ENCODE measurements at regions of chr12 and their contacts with region 1.

Region 1: GRCh38 chr12:108514973-108515814 is at the start of gene FICD:
- DNase-seq: peak; percentile 100
- H3K4me3 Mint-ChIP-seq: peak within 1 kb of the TSS; percentile 96
- H3K27ac Mint-ChIP-seq: peak within 1 kb of the TSS; percentile 93
- H3K4me1 Mint-ChIP-seq: peaks cover 20% of the 10 kb centered on the region
- H3K27me3 Mint-ChIP-seq: peaks cover 13% of the 10 kb centered on the region
- CTCF ChIP-seq: no peak
- total RNA-seq, gene FICD: 14.3 and 15.4 TPM in 2 replicates

Region 2: DNA sequence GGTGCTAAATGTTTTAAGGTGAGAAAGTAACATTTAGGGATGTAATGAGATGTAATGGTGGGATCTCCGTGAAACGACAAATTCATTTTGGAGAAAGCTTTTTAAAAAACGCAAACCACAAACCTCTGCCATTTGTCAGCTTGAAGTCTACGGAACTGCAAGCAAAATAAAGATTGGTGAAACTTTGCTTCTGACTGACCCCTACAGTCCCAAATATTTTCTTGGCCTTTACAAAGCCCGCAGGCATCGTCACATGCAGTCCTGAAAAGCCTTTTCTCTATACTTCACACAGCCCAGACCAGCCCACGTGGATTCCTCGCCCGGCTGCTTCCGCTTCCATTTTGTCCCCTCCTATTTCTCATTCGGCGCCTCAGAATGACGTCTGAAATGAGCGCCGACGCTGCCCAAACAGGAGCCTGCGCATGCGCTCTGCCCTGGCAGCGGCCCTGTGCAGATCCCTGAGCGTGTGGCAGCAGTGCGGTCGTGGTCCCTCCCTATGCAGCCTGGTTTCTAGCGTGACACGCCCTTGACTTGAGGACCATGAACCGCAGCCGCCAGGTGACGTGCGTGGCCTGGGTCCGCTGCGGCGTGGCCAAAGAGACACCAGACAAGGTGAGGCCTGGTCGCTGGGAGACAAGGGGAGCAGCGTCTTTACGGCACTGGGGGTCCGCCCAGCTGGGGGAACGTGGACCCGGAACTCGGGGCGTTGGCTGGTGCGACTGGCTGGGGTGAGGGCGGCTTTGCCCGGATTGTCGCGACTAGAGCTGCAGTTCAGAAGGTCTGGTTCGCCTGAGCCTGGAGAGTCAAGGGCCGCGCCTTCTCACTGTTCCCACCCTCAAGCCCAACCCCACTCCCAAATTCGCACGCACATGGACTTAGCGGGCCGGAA is 829.6 kb before region 1 on chr12 and contains the start of gene PWP1:
- CTCF ChIA-PET with region 1: no interaction called
- intact Hi-C with region 1: loop called (anchors 10 kb)
- DNase-seq: peak; percentile 96
- H3K4me3 Mint-ChIP-seq: peak within 1 kb of the TSS; percentile 94
- H3K27ac Mint-ChIP-seq: peak within 1 kb of the TSS; percentile 96
- H3K4me1 Mint-ChIP-seq: no peaks in the 10 kb centered on the region
- H3K27me3 Mint-ChIP-seq: peaks cover 6% of the 10 kb centered on the region
- CTCF ChIP-seq: no peak
- total RNA-seq, gene PWP1: 52.7 and 60.5 TPM in 2 replicates

Region 3: DNA sequence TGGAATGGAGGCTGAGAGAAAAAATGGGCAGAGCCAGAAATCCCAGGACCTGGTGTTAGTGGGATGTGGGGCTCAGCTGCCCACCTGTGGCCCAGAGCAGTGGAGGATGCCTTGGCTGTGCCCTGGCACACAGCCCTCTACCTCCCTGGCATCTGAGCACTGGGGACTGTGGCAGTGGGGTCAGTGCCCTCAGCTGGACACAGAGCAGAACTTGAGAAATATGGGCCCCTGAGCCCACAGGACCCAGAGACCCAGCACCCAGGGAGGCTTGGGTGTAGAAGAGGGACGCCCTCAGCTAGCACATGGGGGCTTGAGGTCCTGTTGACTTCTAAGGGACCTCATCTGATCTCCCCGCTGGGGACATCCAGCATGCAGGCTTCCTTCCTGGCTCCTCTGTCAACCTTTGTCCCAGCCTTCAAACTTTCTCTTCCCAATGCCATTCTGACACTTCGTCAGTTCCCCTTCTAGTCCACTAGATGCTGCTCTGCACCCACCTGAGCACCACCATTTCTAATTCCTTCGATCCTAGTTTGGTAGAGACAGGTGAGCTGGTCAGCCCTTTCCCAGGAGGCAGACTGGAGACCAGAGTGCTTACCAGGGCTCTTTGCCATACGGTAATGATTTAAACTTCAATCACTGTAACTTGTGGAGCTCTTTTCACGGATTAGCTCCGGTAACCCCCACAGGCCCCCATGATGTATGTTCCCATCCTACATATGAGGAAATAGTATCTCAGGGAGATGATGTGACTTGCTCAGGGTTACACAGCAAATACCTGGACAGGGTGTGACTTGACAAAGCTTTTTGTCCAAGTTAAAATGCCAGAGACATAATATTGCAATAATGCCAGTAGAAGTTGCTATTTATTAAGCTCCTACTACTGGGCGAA is 597.0 kb before region 1 on chr12:
- CTCF ChIA-PET with region 1: interaction called, 8 read pairs
- intact Hi-C with region 1: loop called (anchors 1 kb)
- DNase-seq: peak; percentile 36
- H3K4me3 Mint-ChIP-seq: no peak overlapping the region
- H3K27ac Mint-ChIP-seq: no peak overlapping the region
- H3K4me1 Mint-ChIP-seq: no peaks in the 10 kb centered on the region
- H3K27me3 Mint-ChIP-seq: peaks cover 88% of the 10 kb centered on the region
- CTCF ChIP-seq: peak; percentile 54

Region 4: GRCh38 chr12:107992870-107993451 is 522.2 kb before region 1 on chr12:
- CTCF ChIA-PET with region 1: interaction called, 10 read pairs
- intact Hi-C with region 1: loop called (anchors 1 kb)
- DNase-seq: peak; percentile 53
- H3K4me3 Mint-ChIP-seq: no peak overlapping the region
- H3K27ac Mint-ChIP-seq: no peak overlapping the region
- H3K4me1 Mint-ChIP-seq: no peaks in the 10 kb centered on the region
- H3K27me3 Mint-ChIP-seq: peaks cover 45% of the 10 kb centered on the region
- CTCF ChIP-seq: peak; percentile 56

Region 5: GRCh38 chr12:108193917-108194316 is 321.3 kb before region 1 on chr12:
- CTCF ChIA-PET with region 1: no interaction called
- intact Hi-C with region 1: loop called (anchors 5 kb)
- DNase-seq: peak; percentile 49
- H3K4me3 Mint-ChIP-seq: no peak overlapping the region
- H3K27ac Mint-ChIP-seq: no peak overlapping the region
- H3K4me1 Mint-ChIP-seq: peaks cover 5% of the 10 kb centered on the region
- H3K27me3 Mint-ChIP-seq: peaks cover 40% of the 10 kb centered on the region
- CTCF ChIP-seq: peak; percentile 63

Region 6: DNA sequence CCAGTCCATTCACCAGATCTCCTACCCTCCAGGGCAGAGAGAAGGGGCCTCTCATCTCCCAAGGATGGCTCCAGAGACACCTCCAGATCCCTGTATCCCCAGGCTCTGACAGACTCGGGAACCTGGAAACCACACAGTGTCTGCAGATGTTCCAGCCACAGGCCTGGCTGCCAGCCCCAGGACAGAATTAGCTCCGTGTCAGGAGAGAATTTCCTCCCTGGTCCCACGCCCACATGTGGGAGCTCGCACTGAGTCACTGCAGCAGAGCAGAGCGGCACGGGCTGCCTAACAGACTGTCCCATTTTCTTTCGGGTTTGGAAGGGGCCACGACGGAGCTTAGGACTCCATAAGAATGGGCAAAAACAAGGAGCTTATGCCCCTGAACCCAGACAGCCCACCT is 209.7 kb before region 1 on chr12:
- CTCF ChIA-PET with region 1: no interaction called
- intact Hi-C with region 1: loop called (anchors 10 kb)
- DNase-seq: peak; percentile 51
- H3K4me3 Mint-ChIP-seq: no peak overlapping the region
- H3K27ac Mint-ChIP-seq: peak overlapping the region; percentile 19
- H3K4me1 Mint-ChIP-seq: peaks cover 67% of the 10 kb centered on the region
- H3K27me3 Mint-ChIP-seq: no peaks in the 10 kb centered on the region
- CTCF ChIP-seq: no peak

Region 7: DNA sequence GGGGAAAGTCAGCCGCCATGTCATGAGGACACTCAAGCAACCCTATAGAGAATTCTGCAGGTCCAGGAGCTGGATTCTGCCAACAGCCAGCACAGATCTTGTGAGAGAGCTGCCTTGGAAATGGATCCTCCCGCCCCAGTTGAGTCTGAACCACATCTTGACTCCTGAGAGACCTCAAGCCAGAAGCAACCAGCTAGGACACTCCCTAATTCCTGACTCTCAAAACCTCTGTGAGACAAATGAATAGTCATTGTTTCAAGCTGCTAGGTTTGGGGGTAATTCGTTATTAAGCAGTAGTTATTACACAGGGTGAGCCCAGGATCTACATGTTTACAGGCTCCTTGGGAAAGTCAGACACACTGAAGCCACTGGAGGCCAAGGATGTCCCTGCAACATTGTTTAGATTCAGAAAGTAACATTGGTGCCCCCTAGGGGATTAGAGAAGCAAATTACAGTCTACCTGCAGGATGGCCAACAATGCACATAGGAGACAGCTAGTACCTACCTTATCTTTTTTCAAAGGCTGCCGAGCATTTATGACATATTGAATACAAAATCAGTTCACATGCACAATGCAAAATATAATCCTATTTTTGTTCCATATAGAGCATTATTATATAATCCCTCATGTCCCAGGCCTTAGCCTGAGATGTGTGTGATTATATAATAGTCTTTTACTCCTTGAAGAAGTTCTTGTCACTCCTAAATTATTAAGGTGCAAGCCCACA is 58.0 kb before region 1 on chr12:
- CTCF ChIA-PET with region 1: no interaction called
- intact Hi-C with region 1: no loop called
- DNase-seq: peak; percentile 12
- H3K4me3 Mint-ChIP-seq: no peak overlapping the region
- H3K27ac Mint-ChIP-seq: no peak overlapping the region
- H3K4me1 Mint-ChIP-seq: no peaks in the 10 kb centered on the region
- H3K27me3 Mint-ChIP-seq: peaks cover 84% of the 10 kb centered on the region
- CTCF ChIP-seq: peak; percentile 50